Vagina (tissue), 2 donors: ENCODE measurements at regions of chr12 and their contacts with region 1.

Region 1: DNA sequence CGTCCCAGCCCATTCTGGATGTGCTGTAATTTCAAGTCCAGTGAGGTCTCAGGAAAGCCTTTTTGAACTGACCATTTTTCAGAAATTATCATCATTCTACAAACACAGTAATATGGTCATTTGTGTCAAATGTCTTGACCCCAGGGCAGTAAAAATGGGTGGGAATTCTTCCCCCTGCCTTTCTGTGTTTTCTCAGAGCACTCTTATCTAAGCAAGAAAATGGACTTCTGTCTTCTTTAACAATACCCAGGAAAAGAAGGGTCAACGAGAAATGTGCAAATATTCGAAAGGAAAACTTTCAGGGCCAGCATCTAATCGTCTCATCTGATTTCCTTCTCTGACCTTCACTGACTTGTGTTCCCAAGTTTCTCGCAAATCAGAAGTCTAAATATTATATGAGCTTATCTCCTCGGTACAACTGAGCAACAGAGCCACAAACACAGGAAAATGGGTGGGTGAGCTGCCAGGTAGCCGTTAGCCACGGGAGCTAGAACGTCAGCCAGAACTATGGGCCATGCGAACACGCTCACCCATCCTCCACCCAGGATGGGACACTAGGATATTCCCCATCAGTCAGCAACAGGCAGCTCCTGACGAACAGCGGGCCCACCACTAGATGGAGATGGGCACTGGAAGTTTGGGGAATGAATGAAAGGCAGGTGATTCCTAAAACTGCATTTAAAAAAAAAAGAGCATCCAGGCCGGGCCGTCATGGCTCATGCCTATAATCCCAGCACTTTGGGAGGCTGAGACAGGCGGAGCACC is 57.1 kb downstream of the VWF start:
- DNase-seq: no peak
- H3K4me3 ChIP-seq: no peak overlapping the region
- H3K27ac ChIP-seq: peak overlapping the region; percentile 40
- H3K4me1 ChIP-seq: peaks cover 66% of the 10 kb centered on the region
- H3K27me3 ChIP-seq: no peaks in the 10 kb centered on the region
- CTCF ChIP-seq: peak in 1 of 3 experiments; percentile 9
- POLR2A ChIP-seq: no peak

Region 2: DNA sequence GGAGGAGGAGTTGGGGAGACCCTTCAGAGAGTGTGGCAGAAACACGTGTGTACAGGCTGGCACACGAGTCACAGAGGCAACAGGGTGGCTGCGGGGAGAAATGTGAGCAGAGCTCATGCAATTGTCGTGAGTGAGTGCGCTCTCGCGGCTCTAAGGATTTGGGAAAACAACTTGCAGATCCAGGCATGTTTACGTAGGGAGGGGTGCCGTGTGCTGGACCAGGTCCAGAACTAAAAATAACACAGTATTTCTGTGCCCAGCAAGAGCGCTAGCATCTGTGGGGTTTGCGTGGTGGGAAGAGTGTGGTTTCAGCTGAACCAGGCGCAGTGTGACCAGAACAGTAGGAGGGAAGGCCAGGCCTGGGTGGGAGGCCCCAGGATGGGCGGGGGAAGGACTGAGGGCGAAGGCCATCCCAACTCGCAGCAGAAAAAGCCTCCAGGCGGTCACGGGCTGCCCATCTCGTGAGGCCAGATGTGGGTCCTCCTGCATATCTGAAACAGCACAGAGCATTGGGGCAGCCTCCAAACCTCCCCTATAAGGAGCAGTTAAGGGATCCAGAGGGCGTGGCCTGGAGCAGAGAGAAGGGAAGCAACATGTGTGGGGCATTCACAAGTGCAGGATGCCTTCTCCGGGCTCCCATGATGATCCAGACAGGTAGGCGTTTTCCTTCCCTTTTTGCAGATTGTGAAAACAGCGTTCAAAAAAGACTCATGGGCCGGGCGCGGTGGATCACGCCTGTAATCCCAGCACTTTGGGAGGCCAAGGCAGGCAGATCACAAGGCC is 115.0 kb after region 1 on chr12:
- intact Hi-C with region 1: loop called (anchors 10 kb)
- DNase-seq: no peak
- H3K4me3 ChIP-seq: peak overlapping the region in 1 of 2 donors; percentile 7
- H3K27ac ChIP-seq: peak overlapping the region; percentile 90
- H3K4me1 ChIP-seq: peaks cover 50% of the 10 kb centered on the region
- H3K27me3 ChIP-seq: no peaks in the 10 kb centered on the region
- CTCF ChIP-seq: no peak
- POLR2A ChIP-seq: no peak

Region 3: GRCh38 chr12:6285063-6285477 is 217.7 kb after region 1 on chr12:
- intact Hi-C with region 1: loop called (anchors 5 kb)
- DNase-seq: no peak
- H3K4me3 ChIP-seq: no peak overlapping the region
- H3K27ac ChIP-seq: peak overlapping the region; percentile 20
- H3K4me1 ChIP-seq: peaks cover 9% of the 10 kb centered on the region
- H3K27me3 ChIP-seq: no peaks in the 10 kb centered on the region
- CTCF ChIP-seq: peak; percentile 87 to 95 (median 89)
- POLR2A ChIP-seq: no peak